Heart left ventricle (tissue), 16 donors: ENCODE measurements at regions of chr15 and their contacts with region 1.

Region 1: DNA sequence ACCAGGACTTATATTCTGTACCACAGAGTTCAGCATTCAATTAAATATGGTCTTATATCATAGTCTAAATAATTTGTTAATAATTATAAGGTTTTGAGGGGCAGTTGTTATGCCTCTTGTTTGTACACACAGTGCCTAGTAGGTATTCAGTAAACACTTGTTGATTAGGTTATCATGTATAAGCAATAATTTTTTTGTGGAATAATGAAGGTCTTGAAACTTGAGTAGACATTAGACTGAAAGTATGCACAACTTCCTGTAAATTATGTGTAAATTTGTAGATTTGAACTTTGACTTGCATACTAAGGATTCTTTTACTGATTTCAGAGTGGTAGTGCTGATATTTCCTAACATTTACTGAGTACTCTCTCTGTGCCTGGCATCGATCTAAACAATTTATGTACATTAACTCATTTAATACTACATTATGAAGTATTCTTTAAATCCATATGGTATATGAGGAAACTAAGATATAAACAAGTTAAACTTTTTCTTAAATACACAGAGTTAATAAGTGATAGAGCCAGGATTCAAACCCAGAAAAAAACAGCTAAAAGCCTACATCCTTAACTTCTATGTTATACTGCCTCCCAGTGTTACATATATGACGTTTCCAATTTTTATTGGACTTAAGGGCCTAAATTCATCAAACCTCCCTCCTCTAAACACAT is 65.1 kb downstream of the GLCE start:
- DNase-seq: no peak
- ATAC-seq: no peak
- H3K4me3 ChIP-seq: no peak overlapping the region
- H3K27ac ChIP-seq: no peak overlapping the region
- H3K4me1 ChIP-seq: peaks cover 0 to 7% (median 0%) of the 10 kb centered on the region in 12 donors
- H3K27me3 ChIP-seq: no peaks in the 10 kb centered on the region
- CTCF ChIP-seq: peak in 7 of 12 donors; percentile 22 to 50 (median 41)
- POLR2A ChIP-seq: no peak

Region 2: GRCh38 chr15:69074001-69074842 is 151.3 kb before region 1 on chr15:
- intact Hi-C with region 1: loop called in 2 of 10 experiments (anchors 5 kb)
- DNase-seq: peak; percentile 61 to 80 (median 72)
- ATAC-seq: peak; percentile 87 to 95 (median 92)
- H3K4me3 ChIP-seq: peak overlapping the region; percentile 51 to 80 (median 65)
- H3K27ac ChIP-seq: peak overlapping the region in 11 of 12 donors; percentile 12 to 85 (median 77)
- H3K4me1 ChIP-seq: peaks cover 0 to 21% (median 6%) of the 10 kb centered on the region in 12 donors
- H3K27me3 ChIP-seq: peaks cover 0 to 12% (median 0%) of the 10 kb centered on the region in 9 donors
- CTCF ChIP-seq: peak in 3 of 12 donors; percentile 6 to 13 (median 11)
- POLR2A ChIP-seq: peak in 1 of 2 donors; percentile 48

Region 3: GRCh38 chr15:69172828-69173227 is 52.7 kb before region 1 on chr15:
- intact Hi-C with region 1: loop called in 3 of 10 experiments (anchors 5 to 10 kb)
- DNase-seq: no peak
- ATAC-seq: no peak
- H3K4me3 ChIP-seq: no peak overlapping the region
- H3K27ac ChIP-seq: no peak overlapping the region
- H3K4me1 ChIP-seq: no peaks in the 10 kb centered on the region
- H3K27me3 ChIP-seq: no peaks in the 10 kb centered on the region
- CTCF ChIP-seq: no peak
- POLR2A ChIP-seq: no peak

Region 4: DNA sequence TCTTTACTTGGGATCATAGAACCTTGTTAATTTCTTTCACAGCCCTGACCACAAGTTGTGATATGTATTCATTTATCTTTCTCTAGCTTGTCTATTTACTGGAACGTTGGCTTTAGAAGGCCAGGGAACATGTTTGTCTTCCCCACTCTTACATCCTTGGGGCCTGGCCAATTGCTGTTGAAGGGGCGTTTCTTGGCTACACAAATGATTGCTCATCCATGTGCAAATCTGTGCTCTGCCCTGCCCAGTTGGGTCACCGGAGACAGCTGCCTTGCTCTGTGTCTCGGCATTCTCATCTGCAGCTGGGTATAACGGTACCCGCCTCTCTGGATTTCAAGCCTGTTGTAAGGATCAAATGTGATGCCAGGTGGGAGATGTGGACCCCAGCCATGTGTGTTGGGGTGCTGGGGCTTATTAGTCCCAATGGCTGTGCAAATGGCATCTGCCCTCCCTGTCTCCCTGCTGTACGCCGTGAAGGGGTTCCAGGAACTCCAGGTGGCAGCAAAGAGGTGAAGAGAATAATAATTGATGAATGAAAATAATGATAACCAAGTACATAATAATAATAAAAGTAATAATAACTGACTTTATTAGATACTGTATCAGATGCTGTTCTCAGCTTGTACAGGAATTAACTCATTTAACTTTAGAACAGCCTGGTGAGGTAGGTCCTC is 896.3 kb after region 1 on chr15:
- intact Hi-C with region 1: no loop called
- DNase-seq: peak in 4 of 5 donors; percentile 36 to 64 (median 48)
- ATAC-seq: peak; percentile 45 to 84 (median 65)
- H3K4me3 ChIP-seq: no peak overlapping the region
- H3K27ac ChIP-seq: peak overlapping the region in 4 of 12 donors; percentile 10 to 43 (median 23)
- H3K4me1 ChIP-seq: peaks cover 0 to 23% (median 8%) of the 10 kb centered on the region in 12 donors
- H3K27me3 ChIP-seq: peaks cover 0 to 8% (median 0%) of the 10 kb centered on the region in 9 donors
- CTCF ChIP-seq: no peak
- POLR2A ChIP-seq: no peak